ENCODE measurements at regions of chr19 and their contacts with region 1.

Region 1: GRCh38 chr19:10717356-10718204 is at the start of gene DNM2:
- DNase-seq: peak; percentile 98
- ATAC-seq: peak; percentile 94
- total RNA-seq, gene DNM2: 177 TPM

Region 2: DNA sequence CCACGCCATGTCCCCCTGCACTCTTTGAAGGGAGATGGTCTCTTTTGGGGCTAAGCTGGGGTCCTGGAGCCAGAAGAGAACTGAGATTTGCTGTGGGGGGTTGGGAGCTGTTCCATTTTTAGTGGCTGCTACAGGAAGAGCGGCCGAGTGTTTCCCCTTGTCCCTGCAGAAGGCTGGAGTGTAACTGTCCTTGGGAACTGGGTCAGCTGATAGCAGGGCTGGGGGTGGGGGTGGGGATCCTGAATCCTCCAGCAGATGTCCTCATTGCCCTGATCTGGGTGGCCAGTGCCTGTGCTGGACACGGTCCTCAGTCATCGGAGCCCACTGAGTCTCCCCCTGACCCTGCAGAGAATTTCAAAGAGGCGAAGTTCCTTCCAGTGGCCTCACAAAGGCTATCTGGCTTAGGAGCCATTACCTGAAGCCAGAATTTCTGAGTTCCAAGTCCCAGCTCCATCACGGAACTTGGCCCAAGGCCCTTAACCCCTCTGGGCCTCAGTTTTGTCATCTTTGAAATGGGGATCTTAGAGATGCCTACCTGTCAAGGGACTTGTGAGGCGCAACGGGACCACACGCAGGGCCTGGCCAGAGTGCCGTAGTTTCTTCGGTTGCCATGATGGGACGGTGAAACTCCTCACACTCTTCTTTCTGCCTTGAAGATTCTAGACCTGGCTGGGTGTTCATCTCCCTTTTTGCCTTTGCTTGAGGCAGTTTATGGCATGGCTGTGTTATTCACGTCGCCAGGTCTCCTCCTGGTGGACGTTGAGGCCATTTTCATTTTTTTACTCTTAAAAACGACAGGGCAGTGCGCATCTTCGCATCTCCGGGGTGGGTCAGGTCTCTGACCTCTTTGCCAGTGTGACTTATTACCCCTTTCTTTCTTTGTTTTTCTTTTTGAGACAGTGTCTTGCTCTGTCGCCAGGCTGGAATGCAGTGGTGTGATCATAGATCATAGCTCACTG is 52.2 kb after region 1 on chr19:
- intact Hi-C with region 1: loop called (anchors 1 kb)
- DNase-seq: no peak
- ATAC-seq: peak; percentile 84

Region 3: DNA sequence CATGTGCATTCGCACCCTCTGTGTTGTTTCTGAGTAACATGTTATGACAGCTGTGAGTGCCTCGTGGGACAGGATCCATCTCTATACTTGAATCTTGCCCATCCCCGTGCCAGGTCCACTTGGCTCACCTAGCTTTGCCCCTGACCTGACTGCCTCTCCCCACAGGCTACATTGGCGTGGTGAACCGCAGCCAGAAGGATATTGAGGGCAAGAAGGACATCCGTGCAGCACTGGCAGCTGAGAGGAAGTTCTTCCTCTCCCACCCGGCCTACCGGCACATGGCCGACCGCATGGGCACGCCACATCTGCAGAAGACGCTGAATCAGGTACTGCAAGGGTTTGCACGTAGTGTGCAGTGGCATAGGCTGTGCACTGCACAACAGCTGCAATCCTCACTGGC is 65.2 kb after region 1 on chr19:
- intact Hi-C with region 1: loop called (anchors 1 kb)
- DNase-seq: peak; percentile 81
- ATAC-seq: peak; percentile 86

Region 4: GRCh38 chr19:10835754-10836477 is 118.3 kb after region 1 on chr19 and contains the start of gene TMED1:
- intact Hi-C with region 1: loop called (anchors 1 kb)
- DNase-seq: peak; percentile 100
- ATAC-seq: peak; percentile 95
- total RNA-seq, gene TMED1: 30.3 TPM

Region 5: DNA sequence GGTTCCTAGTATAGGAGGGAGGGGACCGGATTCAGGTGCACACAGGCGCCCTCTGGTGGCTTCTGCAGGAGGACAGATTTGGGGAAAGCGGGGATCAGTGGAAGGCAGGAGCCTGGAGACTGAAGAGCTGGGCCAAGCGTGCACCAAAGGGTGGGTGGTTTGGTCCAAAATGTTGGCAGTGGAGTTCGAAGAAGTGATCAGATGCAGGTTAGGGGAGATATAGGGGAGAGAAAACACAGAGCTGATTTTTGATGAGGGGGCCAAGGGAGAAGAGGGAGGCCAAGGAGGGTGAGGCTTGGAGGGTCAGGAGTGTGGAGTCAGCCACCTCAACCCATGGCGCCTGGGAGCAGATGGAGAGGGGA is 146.9 kb after region 1 on chr19:
- intact Hi-C with region 1: loop called (anchors 2 kb)
- DNase-seq: peak; percentile 88
- ATAC-seq: peak; percentile 87

Measured in Right ventricle myocardium inferior (tissue), 1 donor.